Activated T-helper 1 cell treated with anti-CD3 and anti-CD28 coated beads, Interleukin-12 subunit alpha, Interleukin-12 subunit beta, Interleukin-2, Interleukin-4 antibody, amounts not matched to agents 30 ng/mL and 10 ng/mL and 1 ng/mL, durations not matched to agents 14 hours and 24 hours and 36 hours (primary cell): ENCODE measurements at regions of chr11 and their contacts with region 1.

Region 1: DNA sequence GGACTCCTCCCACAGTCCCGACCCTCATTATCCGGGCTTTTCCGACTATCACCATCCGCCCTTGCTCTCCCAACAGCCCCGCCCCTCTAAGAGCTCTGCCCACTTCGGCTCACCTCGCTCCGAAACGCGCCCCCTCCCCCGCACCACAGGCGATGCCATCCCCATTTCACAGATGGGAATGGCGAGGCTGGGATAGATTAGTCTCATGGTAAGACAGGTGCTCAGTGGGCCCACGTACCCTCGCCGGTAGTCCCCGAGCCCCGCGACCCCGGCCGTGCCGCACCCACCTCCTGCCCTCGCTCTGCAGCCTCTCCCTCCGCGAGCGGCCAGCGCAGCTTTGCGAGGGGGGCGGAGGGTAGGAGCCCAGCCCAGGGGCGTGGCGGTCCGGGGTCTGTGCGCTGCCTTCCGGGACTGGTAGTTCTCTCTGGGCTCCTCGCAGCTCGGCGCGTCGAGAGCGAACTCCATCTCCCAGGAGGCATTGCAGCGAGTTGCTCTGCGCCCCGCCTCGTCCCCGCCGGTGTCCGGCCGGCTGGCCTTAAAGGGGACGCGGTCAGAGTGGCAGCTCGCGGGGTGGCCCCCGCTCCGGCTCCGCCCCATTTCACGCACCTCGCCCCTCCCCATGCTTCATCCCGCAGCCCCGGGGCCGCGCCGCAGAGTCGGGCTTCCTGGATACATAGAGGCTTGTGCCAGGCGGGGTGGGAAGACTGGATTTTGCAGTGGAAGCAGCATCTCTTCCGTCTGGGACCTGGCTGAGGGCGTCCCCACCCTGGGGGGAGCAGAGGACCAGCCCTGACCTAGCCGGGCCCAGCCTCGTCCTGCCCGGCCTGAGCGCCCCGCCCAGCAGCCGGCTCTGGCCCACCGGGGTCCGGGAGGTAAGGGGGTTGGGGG is at the starts of genes KCTD21 and USP35:
- DNase-seq: peak; percentile 93
- H3K4me3 Mint-ChIP-seq: peak within 1 kb of the TSS; percentile 99
- H3K27ac Mint-ChIP-seq: peak within 1 kb of the TSS; percentile 100
- H3K4me1 Mint-ChIP-seq: peaks cover 57% of the 10 kb centered on the region
- H3K27me3 Mint-ChIP-seq: no peaks in the 10 kb centered on the region
- total RNA-seq, gene KCTD21: 10.7 and 12.0 TPM in 2 replicates
- total RNA-seq, gene USP35: 11.8 and 14.0 TPM in 2 replicates

Region 2: DNA sequence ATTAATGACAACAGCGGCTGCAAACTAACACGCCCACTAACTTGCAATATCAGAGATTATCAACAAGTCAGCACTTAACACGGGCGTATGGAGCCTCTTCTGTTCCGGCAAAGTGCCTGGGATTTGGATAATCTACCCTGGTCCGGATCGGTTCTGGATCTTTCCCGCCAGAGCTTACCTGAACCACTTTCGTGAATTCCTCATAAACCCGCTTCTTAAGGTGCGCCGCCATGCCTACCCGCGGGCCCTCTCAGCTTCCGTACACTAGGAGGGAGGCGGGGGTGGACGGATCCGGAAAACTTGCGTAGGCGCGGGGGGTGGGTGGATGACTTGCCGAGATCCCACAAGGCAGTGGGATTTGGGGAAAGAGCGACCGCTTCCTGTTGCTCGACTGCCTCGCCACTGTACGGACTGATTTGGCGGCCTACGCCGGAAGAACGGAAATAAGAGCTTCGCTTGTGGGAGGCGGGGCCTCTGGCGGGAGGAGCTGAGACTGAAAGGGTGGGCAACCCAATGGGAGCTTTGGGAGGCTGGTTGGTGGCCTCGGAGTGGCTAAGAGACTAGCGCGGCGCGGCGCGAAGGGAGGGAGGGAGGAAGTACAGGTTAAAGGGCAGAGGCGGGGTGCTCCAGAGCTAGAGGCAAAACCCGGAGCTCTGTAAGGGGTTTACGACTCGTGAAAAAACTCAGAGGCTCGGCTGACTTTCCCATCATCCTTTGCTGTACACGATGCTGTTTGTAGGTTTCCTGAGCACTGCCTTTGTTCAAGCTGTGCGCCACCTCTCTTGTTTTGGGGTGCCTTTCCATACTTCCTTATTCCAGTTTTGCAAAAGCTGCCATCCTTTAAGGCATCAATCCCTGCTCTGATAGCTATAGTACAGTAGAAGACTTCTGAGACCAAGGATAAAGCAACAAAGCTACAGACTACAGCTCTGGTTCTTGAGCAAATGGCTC is 193.8 kb before region 1 on chr11 and contains the start of gene INTS4:
- intact Hi-C with region 1: loop called (anchors 1 kb)
- DNase-seq: peak; percentile 98
- H3K4me3 Mint-ChIP-seq: peak within 1 kb of the TSS; percentile 92
- H3K27ac Mint-ChIP-seq: peak within 1 kb of the TSS; percentile 84
- H3K4me1 Mint-ChIP-seq: peaks cover 30% of the 10 kb centered on the region
- H3K27me3 Mint-ChIP-seq: no peaks in the 10 kb centered on the region
- total RNA-seq, gene INTS4: 58.2 and 63.6 TPM in 2 replicates

Region 3: DNA sequence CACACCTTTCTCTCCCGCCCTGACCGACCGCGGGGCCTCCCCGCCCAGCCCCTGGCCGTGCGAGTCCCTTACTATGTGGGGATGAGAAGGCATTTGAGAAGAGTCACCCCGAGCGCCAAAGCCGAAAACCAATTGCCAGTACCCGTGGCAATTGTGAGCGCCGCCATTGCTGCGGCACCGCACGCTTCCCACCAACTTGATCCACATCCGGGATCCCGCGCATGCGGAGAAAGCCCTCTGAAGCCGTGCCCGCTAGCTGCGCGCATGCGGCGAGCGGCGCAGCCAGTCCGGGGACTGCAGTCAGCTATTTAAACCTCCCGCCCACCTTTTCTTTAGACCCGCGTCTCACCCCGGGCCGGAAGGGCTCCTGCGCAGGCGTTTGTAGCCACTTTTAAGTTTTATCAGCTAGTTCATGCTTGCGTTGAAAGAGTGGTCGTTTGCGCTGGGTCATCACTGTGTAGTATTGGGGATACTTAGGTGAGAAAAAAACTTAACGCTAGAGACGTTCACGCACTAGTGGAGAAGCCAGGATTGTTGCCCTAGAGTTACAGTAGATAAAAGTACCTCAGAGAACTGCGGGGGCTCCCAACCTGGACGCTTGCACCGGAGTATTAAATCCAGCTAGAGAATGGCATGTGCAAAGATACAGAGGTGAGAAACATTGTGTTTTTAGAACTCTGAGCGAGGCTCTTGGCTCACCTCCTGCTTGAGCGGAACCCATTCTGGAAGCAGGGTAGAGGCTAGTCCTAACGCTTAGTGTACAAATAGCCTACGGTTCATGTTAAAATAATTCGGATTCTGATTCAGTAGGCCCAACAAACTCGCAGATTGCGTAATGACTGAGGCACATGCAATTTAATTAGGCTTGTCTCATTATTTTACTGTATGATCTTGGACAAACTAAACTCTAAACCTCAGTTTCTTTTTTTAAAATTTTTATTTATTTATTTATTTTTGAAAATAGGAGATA is 48.8 kb before region 1 on chr11 and contains the start of gene ALG8:
- intact Hi-C with region 1: loop called (anchors 1 kb)
- DNase-seq: peak; percentile 96
- H3K4me3 Mint-ChIP-seq: peak within 1 kb of the TSS; percentile 95
- H3K27ac Mint-ChIP-seq: peak within 1 kb of the TSS; percentile 90
- H3K4me1 Mint-ChIP-seq: peaks cover 43% of the 10 kb centered on the region
- H3K27me3 Mint-ChIP-seq: no peaks in the 10 kb centered on the region
- total RNA-seq, gene ALG8: 57.9 and 74.2 TPM in 2 replicates

Region 4: DNA sequence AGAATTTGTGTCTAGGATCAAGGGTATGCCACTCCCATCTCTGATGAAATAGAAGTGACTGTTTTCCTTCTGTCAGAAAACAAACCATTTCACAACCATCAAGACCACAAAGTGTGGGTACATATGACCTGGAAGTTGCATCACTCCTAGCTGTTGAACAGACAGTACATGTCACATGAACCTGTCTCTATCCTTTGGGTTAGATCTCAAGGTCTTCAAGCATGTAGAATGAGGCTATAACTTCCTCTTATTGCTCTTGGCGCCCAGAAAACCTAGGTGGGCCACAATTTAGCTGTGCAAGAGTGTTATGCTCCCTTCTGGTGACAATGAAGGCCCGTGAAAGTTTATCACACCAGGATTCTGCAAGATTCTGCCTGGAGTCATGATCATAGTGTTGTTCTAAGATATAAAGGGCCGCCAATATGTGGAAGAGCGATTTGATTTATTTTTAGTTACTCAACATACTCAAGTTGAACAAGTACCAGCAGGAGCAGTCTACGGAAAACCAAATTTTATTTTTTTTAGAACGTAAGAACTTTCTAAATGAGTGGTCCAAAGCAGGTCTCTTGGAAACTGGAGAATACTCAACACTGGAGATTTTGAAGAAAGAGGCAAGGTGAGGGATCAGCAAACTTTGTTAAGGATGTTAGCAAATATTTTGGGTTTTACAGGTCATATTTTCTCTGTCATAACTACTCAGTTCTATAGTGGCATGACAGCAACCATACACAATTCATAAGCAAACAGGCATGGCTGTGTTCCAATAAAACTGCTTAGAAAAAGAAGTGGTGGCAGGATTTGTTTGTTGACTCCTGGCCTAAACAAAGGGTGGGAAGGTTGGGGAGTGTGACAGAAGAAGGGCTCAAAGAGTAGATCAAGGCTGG is 102.0 kb after region 1 on chr11:
- intact Hi-C with region 1: loop called (anchors 2 kb)
- DNase-seq: peak; percentile 54
- H3K4me3 Mint-ChIP-seq: peak overlapping the region; percentile 73
- H3K27ac Mint-ChIP-seq: peak overlapping the region; percentile 92
- H3K4me1 Mint-ChIP-seq: peaks cover 68% of the 10 kb centered on the region
- H3K27me3 Mint-ChIP-seq: no peaks in the 10 kb centered on the region

Region 5: GRCh38 chr11:78416305-78417178 is 228.0 kb after region 1 on chr11:
- intact Hi-C with region 1: loop called (anchors 1 kb)
- DNase-seq: peak; percentile 78
- H3K4me3 Mint-ChIP-seq: peak overlapping the region; percentile 97
- H3K27ac Mint-ChIP-seq: peak overlapping the region; percentile 92
- H3K4me1 Mint-ChIP-seq: peaks cover 64% of the 10 kb centered on the region
- H3K27me3 Mint-ChIP-seq: peaks cover 8% of the 10 kb centered on the region

Region 6: GRCh38 chr11:78574386-78575381 is 386.2 kb after region 1 on chr11 and contains the start of gene NARS2:
- intact Hi-C with region 1: loop called (anchors 1 kb)
- DNase-seq: peak; percentile 95
- H3K4me3 Mint-ChIP-seq: peak within 1 kb of the TSS; percentile 90
- H3K27ac Mint-ChIP-seq: peak within 1 kb of the TSS; percentile 86
- H3K4me1 Mint-ChIP-seq: peaks cover 40% of the 10 kb centered on the region
- H3K27me3 Mint-ChIP-seq: peaks cover 7% of the 10 kb centered on the region
- total RNA-seq, gene NARS2: 38.2 and 38.7 TPM in 2 replicates